ENCODE measurements at regions of chr10 and their contacts with region 1.

Region 1: GRCh38 chr10:22550732-22551131 is 163.6 kb downstream of the PIP4K2A start:
- DNase-seq: peak; percentile 29
- ATAC-seq: no peak
- H3K4me3 ChIP-seq: no peak overlapping the region
- H3K27ac ChIP-seq: no peak overlapping the region
- H3K4me1 ChIP-seq: no peaks in the 10 kb centered on the region; the same call in 1 of the 2 replicates
- H3K27me3 ChIP-seq: no peaks in the 10 kb centered on the region
- CTCF ChIP-seq: peak; percentile 78

Region 2: DNA sequence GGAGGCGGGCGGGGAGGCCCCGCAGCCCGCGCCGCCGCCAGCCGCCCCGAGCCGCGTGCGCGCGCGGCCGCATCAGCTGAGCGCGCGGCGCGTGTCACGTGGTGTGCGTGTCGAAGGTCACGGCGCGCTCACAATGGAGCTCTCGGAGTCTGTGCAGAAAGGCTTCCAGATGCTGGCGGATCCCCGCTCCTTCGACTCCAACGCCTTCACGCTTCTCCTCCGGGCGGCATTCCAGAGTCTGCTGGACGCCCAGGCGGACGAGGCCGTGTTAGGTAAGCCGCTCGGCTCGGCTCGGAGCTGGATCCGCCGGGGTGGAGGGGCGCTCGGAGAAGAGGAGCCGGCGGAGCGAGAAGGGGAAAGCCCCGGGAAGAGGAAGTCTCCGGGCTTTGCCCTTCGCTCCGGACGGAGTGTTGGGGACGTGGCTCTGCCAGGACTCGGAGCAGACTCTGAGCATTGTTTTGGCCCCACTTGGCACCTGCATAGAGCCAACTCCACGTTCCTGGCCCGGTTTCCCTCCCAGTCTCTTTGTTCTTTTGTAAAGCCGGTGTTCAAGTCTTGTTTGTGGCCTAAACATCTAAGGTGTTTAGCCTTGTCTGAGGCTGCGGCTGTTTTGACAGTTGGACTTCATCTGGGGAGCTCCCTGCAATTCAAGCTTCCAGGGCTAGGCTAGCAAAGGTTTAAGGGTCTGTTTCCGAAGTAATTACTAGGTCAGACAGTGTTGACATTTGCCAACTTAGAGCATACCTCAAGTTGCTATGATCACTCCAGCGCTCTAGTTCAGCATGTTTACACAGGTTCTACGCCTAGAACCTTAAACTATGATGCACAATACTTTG is 234.2 kb before region 1 on chr10 and contains the start of gene COMMD3:
- CTCF ChIA-PET with region 1: no interaction called
- POLR2A ChIA-PET with region 1: interaction called, 15 read pairs
- intact Hi-C with region 1: no loop called
- DNase-seq: peak; percentile 82
- ATAC-seq: peak; percentile 50
- H3K4me3 ChIP-seq: peak within 1 kb of the TSS; percentile 92
- H3K27ac ChIP-seq: peak within 1 kb of the TSS; percentile 99
- H3K4me1 ChIP-seq: peaks cover 37% of the 10 kb centered on the region
- H3K27me3 ChIP-seq: no peaks in the 10 kb centered on the region
- CTCF ChIP-seq: no peak
- total RNA-seq, gene COMMD3: 86.4 and 86.6 TPM in 2 replicates

Region 3: DNA sequence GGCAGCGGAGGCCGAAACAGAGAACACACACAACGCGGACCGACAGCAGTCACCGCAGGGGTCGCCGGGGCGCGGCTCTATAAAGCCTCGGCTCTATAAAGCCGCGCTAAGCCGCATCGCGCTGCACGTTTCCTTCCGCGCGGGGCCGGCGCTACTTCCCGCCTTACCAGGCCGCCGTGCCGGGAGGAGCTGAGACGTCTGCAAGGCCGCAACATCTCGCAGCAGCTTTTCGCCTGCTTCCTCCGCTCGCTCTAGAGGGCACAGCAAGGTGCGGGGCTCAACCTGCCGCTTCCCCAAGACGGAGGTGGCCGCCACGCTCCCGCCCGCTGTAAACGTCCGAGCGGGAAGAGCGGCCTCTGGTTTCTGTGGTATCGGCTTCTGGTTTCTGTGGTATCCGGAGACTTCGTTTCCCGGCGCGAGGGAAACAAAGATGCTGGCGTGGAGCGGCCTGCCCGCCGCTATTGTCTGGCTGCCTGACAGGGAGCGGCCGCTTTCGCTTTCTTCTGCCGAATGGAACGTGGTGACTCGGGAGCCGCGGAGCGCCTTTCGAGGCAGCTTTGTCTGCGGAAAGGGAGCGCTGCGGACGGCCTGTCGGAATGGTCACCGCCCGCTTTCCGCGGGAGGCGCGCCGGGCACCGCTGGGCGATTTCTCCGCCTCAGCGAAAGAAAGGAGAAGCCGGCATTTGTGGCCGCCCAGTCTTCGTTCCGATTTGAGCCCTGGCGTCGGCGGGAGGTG is 113.7 kb before region 1 on chr10:
- CTCF ChIA-PET with region 1: no interaction called
- POLR2A ChIA-PET with region 1: no interaction called
- intact Hi-C with region 1: loop called (anchors 5 kb)
- DNase-seq: peak; percentile 80
- ATAC-seq: peak; percentile 64
- H3K4me3 ChIP-seq: peak overlapping the region; percentile 93
- H3K27ac ChIP-seq: peak overlapping the region; percentile 95
- H3K4me1 ChIP-seq: peaks cover 50% of the 10 kb centered on the region
- H3K27me3 ChIP-seq: no peaks in the 10 kb centered on the region
- CTCF ChIP-seq: 0 out of 2 replicates have a peak, but pooled peaks have one; percentile 10

Measured in PC-3 (cell line).